CD8-positive, alpha-beta memory T cell (primary cell): ENCODE measurements at regions of chr17 and their contacts with region 1.

Region 1: DNA sequence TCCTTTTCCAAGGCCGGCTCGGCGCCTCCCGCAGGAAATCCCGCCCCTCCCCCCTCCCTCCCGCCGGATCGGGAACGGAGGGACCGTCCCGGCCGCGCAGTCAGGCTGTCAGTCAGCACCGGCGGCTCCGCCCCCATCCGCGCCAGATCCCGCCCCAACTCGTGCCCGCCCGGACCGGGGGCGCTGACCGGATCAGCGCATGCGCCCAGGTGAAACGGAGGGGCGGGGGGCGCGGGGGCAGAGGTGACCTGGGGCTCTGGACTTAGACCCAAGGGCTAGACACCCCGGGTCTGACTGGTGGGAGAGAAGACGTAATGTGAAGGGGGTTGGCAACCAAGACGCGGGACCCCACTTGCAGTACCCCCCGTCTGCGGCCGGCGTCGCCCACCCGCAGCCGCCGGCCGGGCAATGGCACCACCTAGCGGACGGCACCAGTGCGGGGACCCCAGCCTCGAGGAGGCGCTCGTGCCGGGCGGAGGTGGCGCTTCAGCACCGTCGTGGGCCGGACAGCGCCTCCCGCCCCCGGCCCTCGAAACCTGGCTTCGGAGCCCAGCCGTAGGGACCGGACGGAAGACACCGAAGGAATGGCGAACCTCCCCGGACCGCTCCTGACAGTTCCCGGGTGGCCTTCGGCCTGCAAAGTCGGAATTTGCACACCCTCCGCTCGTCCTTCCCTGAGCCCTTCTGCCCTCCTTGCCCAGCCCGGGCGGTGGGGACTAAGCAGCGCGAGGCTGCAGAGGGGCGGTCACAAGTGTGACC is at the start of gene CASKIN2:
- DNase-seq: peak; percentile 70 to 83 (median 74)
- H3K4me3 ChIP-seq: peak within 1 kb of the TSS; percentile 88
- H3K4me3 Mint-ChIP-seq: peak within 1 kb of the TSS; percentile 67 to 91 (median 81)
- H3K27ac ChIP-seq: no peak within 1 kb of the TSS
- H3K27ac Mint-ChIP-seq: peak within 1 kb of the TSS in 3 of 8 donors; percentile 42 to 64 (median 62)
- H3K4me1 ChIP-seq: peaks cover 28% of the 10 kb centered on the region
- H3K4me1 Mint-ChIP-seq: peaks cover 27 to 29% (median 28%) of the 10 kb centered on the region in 3 donors
- H3K27me3 ChIP-seq: no peaks in the 10 kb centered on the region
- H3K27me3 Mint-ChIP-seq: peaks cover 0 to 3% of the 10 kb centered on the region in 2 donors
- total RNA-seq, gene CASKIN2: 6.9 to 11.1 TPM

Region 2: GRCh38 chr17:74972107-74972972 is 543.3 kb before region 1 on chr17 and contains the start of gene HID1:
- CTCF ChIA-PET with region 1: no interaction called
- POLR2A ChIA-PET with region 1: interaction called, 15 read pairs
- DNase-seq: peak; percentile 69 to 87 (median 77)
- H3K4me3 ChIP-seq: peak within 1 kb of the TSS; percentile 64
- H3K4me3 Mint-ChIP-seq: peak within 1 kb of the TSS; percentile 79 to 90 (median 84)
- H3K27ac ChIP-seq: no peak within 1 kb of the TSS
- H3K27ac Mint-ChIP-seq: peak within 1 kb of the TSS in 5 of 8 donors; percentile 48 to 88 (median 68)
- H3K4me1 ChIP-seq: peaks cover 13% of the 10 kb centered on the region
- H3K4me1 Mint-ChIP-seq: peaks cover 5 to 20% (median 6%) of the 10 kb centered on the region in 3 donors
- H3K27me3 ChIP-seq: peaks cover 8% of the 10 kb centered on the region
- H3K27me3 Mint-ChIP-seq: peaks cover 4 to 22% of the 10 kb centered on the region in 2 donors
- total RNA-seq, gene HID1: 0.91 to 2.3 TPM

Region 3: GRCh38 chr17:75428543-75429469 is 86.9 kb before region 1 on chr17:
- CTCF ChIA-PET with region 1: interaction called, 12 read pairs
- POLR2A ChIA-PET with region 1: no interaction called
- DNase-seq: no peak
- H3K4me3 ChIP-seq: no peak overlapping the region
- H3K4me3 Mint-ChIP-seq: no peak overlapping the region
- H3K27ac ChIP-seq: no peak overlapping the region
- H3K27ac Mint-ChIP-seq: no peak overlapping the region
- H3K4me1 ChIP-seq: no peaks in the 10 kb centered on the region
- H3K4me1 Mint-ChIP-seq: peaks cover 7 to 15% (median 11%) of the 10 kb centered on the region in 3 donors
- H3K27me3 ChIP-seq: no peaks in the 10 kb centered on the region
- H3K27me3 Mint-ChIP-seq: peaks cover 1 to 19% of the 10 kb centered on the region in 2 donors

Region 4: DNA sequence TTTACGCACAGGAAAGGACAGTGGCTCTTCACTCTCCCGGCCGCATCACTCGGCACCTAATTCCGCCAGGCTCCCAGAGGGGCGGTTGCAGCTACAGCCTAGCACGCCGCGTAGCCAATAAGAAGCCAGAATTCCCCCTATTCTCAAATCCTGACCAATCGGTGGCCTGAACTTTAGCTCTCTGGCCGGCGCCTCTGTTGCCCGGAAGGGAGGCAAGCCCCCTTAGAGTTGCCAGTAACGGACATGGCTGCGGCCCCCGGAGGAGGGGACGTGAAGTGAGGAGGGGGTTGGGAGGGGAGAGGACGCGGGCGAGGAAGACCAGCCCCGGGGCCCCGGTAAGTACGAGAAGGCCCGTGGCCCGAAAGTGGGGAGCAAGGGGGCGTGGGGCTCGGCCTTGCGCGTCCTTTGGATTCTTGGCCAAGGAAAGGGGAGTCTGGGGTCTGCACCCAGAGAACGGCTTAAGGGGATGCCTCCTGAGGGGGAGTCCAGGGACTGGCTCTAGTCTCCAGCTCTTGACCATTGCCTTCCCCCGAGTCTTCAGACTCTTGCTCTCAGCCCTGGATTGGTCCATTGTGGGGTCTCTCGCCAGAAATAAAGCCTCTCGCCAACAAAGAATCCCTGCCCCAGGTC is 59.1 kb before region 1 on chr17 and contains the start of gene TMEM94:
- CTCF ChIA-PET with region 1: interaction called, 13 read pairs
- POLR2A ChIA-PET with region 1: interaction called, 14 read pairs
- DNase-seq: peak; percentile 84 to 95 (median 90)
- H3K4me3 ChIP-seq: peak within 1 kb of the TSS; percentile 98
- H3K4me3 Mint-ChIP-seq: peak within 1 kb of the TSS; percentile 92 to 99 (median 94)
- H3K27ac ChIP-seq: peak within 1 kb of the TSS; percentile 87
- H3K27ac Mint-ChIP-seq: peak within 1 kb of the TSS; percentile 65 to 98 (median 94)
- H3K4me1 ChIP-seq: peaks cover 22% of the 10 kb centered on the region
- H3K4me1 Mint-ChIP-seq: peaks cover 30 to 47% (median 33%) of the 10 kb centered on the region in 3 donors
- H3K27me3 ChIP-seq: no peaks in the 10 kb centered on the region
- H3K27me3 Mint-ChIP-seq: peaks cover 0 to 2% of the 10 kb centered on the region in 2 donors
- total RNA-seq, gene TMEM94: 63.3 to 66.0 TPM

Region 5: GRCh38 chr17:75535119-75535537 is 19.5 kb after region 1 on chr17:
- CTCF ChIA-PET with region 1: interaction called, 10 read pairs
- POLR2A ChIA-PET with region 1: interaction called, 16 read pairs
- DNase-seq: peak; percentile 42 to 77 (median 49)
- H3K4me3 ChIP-seq: peak overlapping the region; percentile 17
- H3K4me3 Mint-ChIP-seq: peak overlapping the region; percentile 7 to 84 (median 73)
- H3K27ac ChIP-seq: peak overlapping the region; percentile 35
- H3K27ac Mint-ChIP-seq: peak overlapping the region; percentile 83 to 97 (median 96)
- H3K4me1 ChIP-seq: peaks cover 30% of the 10 kb centered on the region
- H3K4me1 Mint-ChIP-seq: peaks cover 28 to 43% (median 31%) of the 10 kb centered on the region in 3 donors
- H3K27me3 ChIP-seq: no peaks in the 10 kb centered on the region
- H3K27me3 Mint-ChIP-seq: no peaks in the 10 kb centered on the region

Region 6: GRCh38 chr17:75589012-75589918 is 73.6 kb after region 1 on chr17:
- CTCF ChIA-PET with region 1: interaction called, 9 read pairs
- POLR2A ChIA-PET with region 1: interaction called, 12 read pairs
- DNase-seq: peak; percentile 87 to 95 (median 90)
- H3K4me3 ChIP-seq: peak overlapping the region; percentile 47
- H3K4me3 Mint-ChIP-seq: peak overlapping the region; percentile 71 to 92 (median 81)
- H3K27ac ChIP-seq: peak overlapping the region; percentile 31
- H3K27ac Mint-ChIP-seq: peak overlapping the region in 6 of 8 donors; percentile 53 to 89 (median 75)
- H3K4me1 ChIP-seq: peaks cover 8% of the 10 kb centered on the region
- H3K4me1 Mint-ChIP-seq: peaks cover 3 to 22% (median 12%) of the 10 kb centered on the region in 3 donors
- H3K27me3 ChIP-seq: no peaks in the 10 kb centered on the region
- H3K27me3 Mint-ChIP-seq: no peaks in the 10 kb centered on the region